ENCODE measurements at regions of chr6 and their contacts with region 1.

Region 1: GRCh38 chr6:12289933-12290820 is at the start of gene EDN1:
- DNase-seq: peak; percentile 80 to 84
- ATAC-seq: peak; percentile 76
- total RNA-seq, gene EDN1: 16.8 to 24.8 TPM

Region 2: DNA sequence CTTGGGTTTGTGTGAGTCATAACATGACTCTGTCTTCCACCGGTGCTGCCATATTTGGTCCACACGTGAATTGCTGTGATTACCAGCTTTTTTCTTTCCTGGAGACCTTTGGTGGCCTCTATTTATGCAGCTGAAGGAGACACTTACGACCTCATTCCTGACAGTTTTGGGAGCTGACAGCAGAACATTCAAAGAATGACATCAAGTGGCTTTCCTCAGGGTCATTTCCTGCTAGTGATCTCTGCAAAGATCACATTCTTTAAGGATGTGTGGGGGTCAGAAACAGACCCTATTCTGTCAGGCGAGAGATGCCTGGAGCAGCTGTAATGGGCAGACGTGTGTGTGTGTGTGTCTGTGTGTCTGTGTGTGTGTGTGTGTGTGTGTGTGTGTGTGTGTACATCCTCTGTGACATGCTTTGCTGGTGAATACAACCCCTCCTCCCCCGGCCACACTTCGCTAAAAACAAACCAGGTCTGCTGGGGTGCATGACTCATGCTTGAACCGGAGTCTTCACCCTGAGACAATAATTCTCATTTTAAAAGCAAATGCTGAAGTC is 637.1 kb before region 1 on chr6:
- intact Hi-C with region 1: loop called in 1 of 2 experiments (anchors 10 kb)
- DNase-seq: no peak
- ATAC-seq: no peak

Region 3: GRCh38 chr6:12605888-12606345 is 315.7 kb after region 1 on chr6:
- intact Hi-C with region 1: loop called in 1 of 2 experiments (anchors 5 kb)
- DNase-seq: peak; percentile 48 to 52
- ATAC-seq: peak; percentile 90